Caco-2 (cell line): ENCODE measurements at regions of chr7 and their contacts with region 1.

Region 1: GRCh38 chr7:103524042-103524907 is 78.3 kb upstream of the SLC26A5 start:
- DNase-seq: no peak
- H3K4me3 ChIP-seq: no peak overlapping the region
- H3K4me3 Mint-ChIP-seq: no peak overlapping the region
- H3K27ac Mint-ChIP-seq: peak overlapping the region; percentile 23
- H3K4me1 ChIP-seq: no peaks in the 10 kb centered on the region
- H3K4me1 Mint-ChIP-seq: peaks cover 12% of the 10 kb centered on the region
- H3K27me3 ChIP-seq: no peaks in the 10 kb centered on the region
- H3K27me3 Mint-ChIP-seq: no peaks in the 10 kb centered on the region
- CTCF ChIP-seq: peak; percentile 42 to 44

Region 2: GRCh38 chr7:103447073-103447951 is 77.0 kb before region 1 on chr7:
- CTCF ChIA-PET with region 1: no interaction called
- POLR2A ChIA-PET with region 1: no interaction called
- intact Hi-C with region 1: loop called (anchors 1 kb)
- DNase-seq: peak; percentile 73 to 78
- H3K4me3 ChIP-seq: no peak overlapping the region
- H3K4me3 Mint-ChIP-seq: peak overlapping the region; percentile 10
- H3K27ac Mint-ChIP-seq: no peak overlapping the region
- H3K4me1 ChIP-seq: peaks cover 8% of the 10 kb centered on the region
- H3K4me1 Mint-ChIP-seq: no peaks in the 10 kb centered on the region
- H3K27me3 ChIP-seq: no peaks in the 10 kb centered on the region
- H3K27me3 Mint-ChIP-seq: peaks cover 10% of the 10 kb centered on the region
- CTCF ChIP-seq: peak; percentile 75 to 94

Region 3: DNA sequence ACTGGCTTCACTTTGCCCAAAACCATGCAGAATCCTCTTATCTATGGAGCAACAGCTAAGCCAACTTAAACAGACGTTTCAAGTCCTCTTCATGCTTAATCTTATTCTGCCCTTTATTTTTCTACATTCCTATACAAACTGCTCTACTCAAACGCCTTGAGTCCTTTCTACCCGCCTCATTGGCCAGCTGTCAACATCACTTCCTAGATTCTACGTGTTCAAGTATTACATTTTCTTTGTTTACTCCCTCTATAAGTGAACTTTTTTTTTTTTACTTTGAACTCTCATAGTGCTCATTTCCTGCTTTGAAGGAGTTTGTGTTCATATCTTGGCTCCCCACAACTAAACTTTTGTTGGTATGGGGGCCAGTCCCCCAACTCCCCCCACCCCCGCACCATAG is 49.3 kb before region 1 on chr7:
- CTCF ChIA-PET with region 1: no interaction called
- POLR2A ChIA-PET with region 1: no interaction called
- intact Hi-C with region 1: no loop called
- DNase-seq: no peak
- H3K4me3 ChIP-seq: no peak overlapping the region
- H3K4me3 Mint-ChIP-seq: no peak overlapping the region
- H3K27ac Mint-ChIP-seq: no peak overlapping the region
- H3K4me1 ChIP-seq: no peaks in the 10 kb centered on the region
- H3K4me1 Mint-ChIP-seq: no peaks in the 10 kb centered on the region
- H3K27me3 ChIP-seq: no peaks in the 10 kb centered on the region
- H3K27me3 Mint-ChIP-seq: no peaks in the 10 kb centered on the region
- CTCF ChIP-seq: no peak

Region 4: GRCh38 chr7:103547451-103548284 is 23.4 kb after region 1 on chr7:
- CTCF ChIA-PET with region 1: no interaction called
- POLR2A ChIA-PET with region 1: no interaction called
- intact Hi-C with region 1: no loop called
- DNase-seq: no peak
- H3K4me3 ChIP-seq: no peak overlapping the region
- H3K4me3 Mint-ChIP-seq: no peak overlapping the region
- H3K27ac Mint-ChIP-seq: no peak overlapping the region
- H3K4me1 ChIP-seq: no peaks in the 10 kb centered on the region
- H3K4me1 Mint-ChIP-seq: no peaks in the 10 kb centered on the region
- H3K27me3 ChIP-seq: no peaks in the 10 kb centered on the region; the same call in 1 of the 2 replicates
- H3K27me3 Mint-ChIP-seq: no peaks in the 10 kb centered on the region
- CTCF ChIP-seq: no peak

Region 5: DNA sequence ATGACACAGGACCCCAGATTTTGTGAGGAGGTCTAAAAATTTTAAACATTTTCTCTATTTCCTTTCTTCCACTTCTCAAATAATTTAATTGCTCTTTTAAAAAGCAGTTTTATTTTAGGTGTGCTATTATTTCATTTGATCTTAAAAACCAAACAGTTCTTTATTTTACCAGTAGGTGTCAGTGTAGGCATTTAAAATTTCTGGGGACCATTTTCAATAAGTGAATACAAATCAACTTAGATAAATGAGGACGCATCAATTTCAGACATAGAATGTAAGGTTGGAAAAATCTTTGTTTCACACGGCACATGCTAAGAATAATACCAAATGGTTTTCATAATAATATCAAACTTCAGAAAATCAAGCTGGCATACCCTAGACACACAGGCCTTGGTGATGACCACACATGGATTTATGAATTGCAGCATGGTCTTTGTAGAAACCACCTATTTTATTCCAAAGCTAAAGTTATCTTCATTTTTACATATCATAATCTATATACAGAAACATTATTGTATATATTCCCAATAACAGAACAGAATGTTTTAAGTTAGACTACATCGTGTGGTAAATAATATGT is 49.3 kb after region 1 on chr7:
- CTCF ChIA-PET with region 1: no interaction called
- POLR2A ChIA-PET with region 1: no interaction called
- intact Hi-C with region 1: loop called (anchors 2 kb)
- DNase-seq: peak in 1 of 2 experiments; percentile 19
- H3K4me3 ChIP-seq: no peak overlapping the region
- H3K4me3 Mint-ChIP-seq: no peak overlapping the region
- H3K27ac Mint-ChIP-seq: no peak overlapping the region
- H3K4me1 ChIP-seq: peaks cover 36% of the 10 kb centered on the region
- H3K4me1 Mint-ChIP-seq: peaks cover 36% of the 10 kb centered on the region
- H3K27me3 ChIP-seq: no peaks in the 10 kb centered on the region
- H3K27me3 Mint-ChIP-seq: no peaks in the 10 kb centered on the region
- CTCF ChIP-seq: peak; percentile 40 to 54

Region 6: DNA sequence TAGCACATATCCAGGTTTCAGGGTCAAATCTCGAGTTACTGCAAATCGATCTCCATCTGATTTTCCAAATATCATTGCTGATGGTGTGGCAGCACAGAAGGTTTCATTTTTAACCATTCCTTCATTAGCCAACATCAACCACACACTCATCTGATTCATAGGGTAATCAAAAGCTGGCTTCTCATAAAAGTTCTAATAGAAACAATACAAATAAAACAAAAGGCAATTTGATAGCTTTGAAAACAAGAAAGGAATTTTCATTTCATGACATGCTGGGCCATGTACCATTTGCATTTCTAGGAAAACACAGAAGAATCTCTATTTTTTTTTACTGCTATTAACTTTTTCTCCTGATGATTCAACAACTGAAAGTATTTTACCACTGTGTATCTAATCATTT is 69.4 kb after region 1 on chr7:
- CTCF ChIA-PET with region 1: no interaction called
- POLR2A ChIA-PET with region 1: no interaction called
- intact Hi-C with region 1: no loop called
- DNase-seq: no peak
- H3K4me3 ChIP-seq: no peak overlapping the region
- H3K4me3 Mint-ChIP-seq: no peak overlapping the region
- H3K27ac Mint-ChIP-seq: no peak overlapping the region
- H3K4me1 ChIP-seq: 0 out of 2 replicates have a peak, but pooled peaks cover 2% of the 10 kb centered on the region
- H3K4me1 Mint-ChIP-seq: no peaks in the 10 kb centered on the region
- H3K27me3 ChIP-seq: no peaks in the 10 kb centered on the region
- H3K27me3 Mint-ChIP-seq: no peaks in the 10 kb centered on the region
- CTCF ChIP-seq: no peak

Region 7: DNA sequence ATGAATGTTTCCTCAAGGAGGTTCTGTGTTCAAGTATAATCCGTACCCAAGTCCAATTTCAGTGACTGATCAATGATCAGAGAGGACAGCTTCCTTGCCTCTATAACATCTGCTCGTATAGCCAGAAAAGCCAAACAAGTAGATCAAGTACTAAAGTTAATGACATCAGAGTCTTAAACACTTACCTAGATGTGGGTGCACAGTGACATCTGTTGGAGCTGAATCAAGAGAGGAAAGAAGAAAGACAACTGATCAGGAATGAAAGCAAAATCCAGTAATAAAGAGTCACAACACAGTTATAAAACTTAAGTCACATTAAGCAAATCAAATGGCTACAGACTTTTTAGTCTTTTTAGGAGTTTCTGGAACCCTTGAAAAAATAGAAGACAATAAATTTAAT is 228.7 kb after region 1 on chr7:
- CTCF ChIA-PET with region 1: interaction called, 3 read pairs
- POLR2A ChIA-PET with region 1: no interaction called
- intact Hi-C with region 1: loop called (anchors 1 kb)
- DNase-seq: peak in 1 of 2 experiments; percentile 32
- H3K4me3 ChIP-seq: no peak overlapping the region
- H3K4me3 Mint-ChIP-seq: no peak overlapping the region
- H3K27ac Mint-ChIP-seq: no peak overlapping the region
- H3K4me1 ChIP-seq: no peaks in the 10 kb centered on the region
- H3K4me1 Mint-ChIP-seq: no peaks in the 10 kb centered on the region
- H3K27me3 ChIP-seq: no peaks in the 10 kb centered on the region
- H3K27me3 Mint-ChIP-seq: no peaks in the 10 kb centered on the region
- CTCF ChIP-seq: peak; percentile 28 to 45

Region 8: GRCh38 chr7:103805346-103805745 is 281.1 kb after region 1 on chr7:
- CTCF ChIA-PET with region 1: no interaction called
- POLR2A ChIA-PET with region 1: no interaction called
- intact Hi-C with region 1: no loop called
- DNase-seq: no peak
- H3K4me3 ChIP-seq: no peak overlapping the region
- H3K4me3 Mint-ChIP-seq: no peak overlapping the region
- H3K27ac Mint-ChIP-seq: no peak overlapping the region
- H3K4me1 ChIP-seq: peaks cover 15% of the 10 kb centered on the region
- H3K4me1 Mint-ChIP-seq: peaks cover 16% of the 10 kb centered on the region
- H3K27me3 ChIP-seq: no peaks in the 10 kb centered on the region
- H3K27me3 Mint-ChIP-seq: no peaks in the 10 kb centered on the region
- CTCF ChIP-seq: no peak

Region 9: DNA sequence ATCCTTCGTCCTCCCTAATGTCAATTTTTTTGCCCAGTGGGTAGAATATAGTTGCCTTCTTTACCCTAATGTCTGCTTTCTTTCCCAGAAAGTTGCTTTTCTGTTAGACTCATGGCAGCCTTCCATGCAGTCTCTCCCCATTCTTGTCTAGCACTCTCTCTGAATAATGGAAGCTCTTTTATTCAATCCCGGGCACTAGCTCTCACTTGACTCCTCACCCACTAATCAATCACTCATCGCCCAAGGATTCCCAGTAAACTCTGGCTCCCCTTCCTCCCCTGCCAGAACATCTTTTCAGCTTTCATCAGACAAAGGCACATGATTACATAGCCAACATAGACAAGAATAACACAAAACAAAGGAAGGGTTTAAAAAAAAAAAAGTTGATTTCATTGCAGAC is 565.3 kb after region 1 on chr7:
- CTCF ChIA-PET with region 1: no interaction called
- POLR2A ChIA-PET with region 1: no interaction called
- intact Hi-C with region 1: loop called (anchors 5 kb)
- DNase-seq: peak; percentile 46 to 60
- H3K4me3 ChIP-seq: no peak overlapping the region
- H3K4me3 Mint-ChIP-seq: no peak overlapping the region
- H3K27ac Mint-ChIP-seq: peak overlapping the region; percentile 43
- H3K4me1 ChIP-seq: peaks cover 12% of the 10 kb centered on the region
- H3K4me1 Mint-ChIP-seq: peaks cover 19% of the 10 kb centered on the region
- H3K27me3 ChIP-seq: no peaks in the 10 kb centered on the region
- H3K27me3 Mint-ChIP-seq: no peaks in the 10 kb centered on the region
- CTCF ChIP-seq: no peak

Region 10: GRCh38 chr7:104156842-104157277 is 632.6 kb after region 1 on chr7:
- CTCF ChIA-PET with region 1: no interaction called
- POLR2A ChIA-PET with region 1: no interaction called
- intact Hi-C with region 1: loop called (anchors 1 kb)
- DNase-seq: peak in 1 of 2 experiments; percentile 18
- H3K4me3 ChIP-seq: no peak overlapping the region
- H3K4me3 Mint-ChIP-seq: no peak overlapping the region
- H3K27ac Mint-ChIP-seq: peak overlapping the region; percentile 63
- H3K4me1 ChIP-seq: peaks cover 9% of the 10 kb centered on the region
- H3K4me1 Mint-ChIP-seq: peaks cover 7% of the 10 kb centered on the region
- H3K27me3 ChIP-seq: no peaks in the 10 kb centered on the region
- H3K27me3 Mint-ChIP-seq: no peaks in the 10 kb centered on the region
- CTCF ChIP-seq: peak; percentile 56 to 65

Region 11: GRCh38 chr7:104231054-104232046 is 707.1 kb after region 1 on chr7:
- CTCF ChIA-PET with region 1: no interaction called
- POLR2A ChIA-PET with region 1: no interaction called
- intact Hi-C with region 1: loop called (anchors 5 kb)
- DNase-seq: peak; percentile 61
- H3K4me3 ChIP-seq: no peak overlapping the region
- H3K4me3 Mint-ChIP-seq: no peak overlapping the region
- H3K27ac Mint-ChIP-seq: no peak overlapping the region
- H3K4me1 ChIP-seq: peaks cover 15% of the 10 kb centered on the region
- H3K4me1 Mint-ChIP-seq: peaks cover 16% of the 10 kb centered on the region
- H3K27me3 ChIP-seq: no peaks in the 10 kb centered on the region
- H3K27me3 Mint-ChIP-seq: no peaks in the 10 kb centered on the region
- CTCF ChIP-seq: peak; percentile 84 to 91